ENCODE measurements at regions of chr22 and their contacts with region 1.

Region 1: DNA sequence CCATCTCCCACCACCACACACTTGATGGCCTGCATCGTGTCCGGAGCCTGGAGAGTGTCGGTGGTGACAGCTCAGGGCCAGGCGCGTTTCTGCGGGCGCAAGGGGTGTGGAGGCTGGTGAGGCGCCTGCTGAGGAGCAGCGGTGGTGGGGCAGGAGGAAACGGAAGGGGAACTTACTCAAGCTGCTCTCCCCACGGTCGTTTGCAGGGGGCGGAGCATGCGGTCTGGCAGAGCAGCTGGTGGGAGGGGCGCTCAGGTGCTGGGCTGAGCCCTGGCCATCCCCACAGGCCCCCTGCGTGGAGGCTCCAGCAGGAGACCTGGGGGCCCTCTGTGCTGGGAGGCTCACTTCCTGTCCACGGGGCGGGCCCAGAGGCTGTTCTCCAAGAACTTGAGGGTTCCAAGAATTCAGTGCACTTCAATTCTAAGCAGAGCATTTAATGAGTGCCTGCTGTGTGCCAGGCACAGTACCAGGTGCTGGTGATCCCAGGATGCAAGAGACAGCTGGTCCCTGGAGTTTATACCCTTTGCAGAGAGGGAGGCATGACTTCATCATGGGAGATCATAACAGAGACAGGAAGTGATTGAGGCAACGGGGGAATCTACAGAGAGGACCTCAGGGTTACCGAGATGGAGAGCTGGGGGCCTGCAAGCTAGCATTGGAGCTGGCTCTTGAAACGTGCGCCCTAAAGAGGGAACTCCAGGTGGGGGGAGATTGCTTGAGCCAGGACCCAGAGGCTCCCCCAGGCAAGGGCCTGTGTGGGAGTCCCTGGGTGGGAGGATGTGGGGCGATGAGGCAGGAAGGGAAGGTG is at the start of gene RAC2:
- DNase-seq: peak; percentile 98
- ATAC-seq: peak; percentile 71
- H3K4me3 Mint-ChIP-seq: peak within 1 kb of the TSS; percentile 98
- H3K27ac Mint-ChIP-seq: peak within 1 kb of the TSS; percentile 97
- H3K4me1 Mint-ChIP-seq: peaks cover 42% of the 10 kb centered on the region
- H3K27me3 Mint-ChIP-seq: no peaks in the 10 kb centered on the region
- CTCF ChIP-seq: no peak
- total RNA-seq, gene RAC2: 699 to 717 TPM

Region 2: GRCh38 chr22:37148742-37149665 is 95.3 kb before region 1 on chr22:
- CTCF ChIA-PET with region 1: no interaction called
- POLR2A ChIA-PET with region 1: interaction called, 41 read pairs
- intact Hi-C with region 1: no loop called
- DNase-seq: no peak
- ATAC-seq: no peak
- H3K4me3 Mint-ChIP-seq: peak overlapping the region; percentile 87
- H3K27ac Mint-ChIP-seq: peak overlapping the region; percentile 93
- H3K4me1 Mint-ChIP-seq: peaks cover 60% of the 10 kb centered on the region
- H3K27me3 Mint-ChIP-seq: no peaks in the 10 kb centered on the region
- CTCF ChIP-seq: no peak

Region 3: GRCh38 chr22:37218771-37219411 is 25.4 kb before region 1 on chr22:
- CTCF ChIA-PET with region 1: interaction called, 7 read pairs
- POLR2A ChIA-PET with region 1: interaction called, 61 read pairs
- intact Hi-C with region 1: no loop called
- DNase-seq: peak; percentile 85
- ATAC-seq: peak; percentile 74
- H3K4me3 Mint-ChIP-seq: peak overlapping the region; percentile 76
- H3K27ac Mint-ChIP-seq: peak overlapping the region; percentile 94
- H3K4me1 Mint-ChIP-seq: peaks cover 74% of the 10 kb centered on the region
- H3K27me3 Mint-ChIP-seq: no peaks in the 10 kb centered on the region
- CTCF ChIP-seq: no peak

Region 4: DNA sequence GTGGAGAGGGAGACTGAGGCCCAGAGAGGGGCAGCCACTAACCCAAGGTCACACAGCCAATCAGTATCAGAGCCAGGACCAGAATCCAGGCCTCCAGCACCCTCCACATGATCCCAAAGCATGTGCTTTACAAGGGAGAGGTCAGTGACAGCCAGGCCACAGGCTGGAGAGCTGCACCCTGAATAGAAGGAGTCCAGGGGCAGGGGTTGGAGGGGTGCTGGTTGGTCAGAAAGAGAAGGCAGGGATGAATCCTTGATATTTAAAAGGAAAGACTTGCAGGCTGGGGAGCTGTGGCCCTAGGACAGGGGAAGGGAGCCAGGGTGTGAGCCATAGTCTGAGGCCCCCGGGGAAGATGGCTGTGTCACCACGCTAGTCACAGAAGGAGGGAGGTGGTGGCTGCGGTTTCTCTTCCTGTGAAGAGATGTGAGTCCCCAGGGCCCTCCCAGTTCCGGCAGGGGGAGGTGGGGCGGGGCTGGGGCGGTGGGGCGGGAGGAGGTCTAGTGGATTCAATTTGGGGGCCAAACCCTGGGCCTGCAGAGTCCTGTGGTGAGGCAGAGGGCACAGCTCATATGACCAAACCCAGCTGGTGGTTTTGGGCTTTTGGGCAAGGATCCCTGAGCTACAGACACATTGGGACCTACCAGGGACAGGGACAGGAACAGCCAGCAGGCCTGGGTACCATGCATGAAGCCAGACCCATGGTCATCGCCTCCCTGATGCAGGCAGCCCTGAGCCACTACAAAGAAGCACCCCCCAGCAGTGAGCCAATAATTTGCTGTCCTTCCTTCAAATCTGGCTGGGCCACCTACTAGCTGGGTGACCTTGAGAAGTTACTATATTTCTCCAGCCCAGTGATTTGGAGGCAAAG is 14.3 kb before region 1 on chr22:
- CTCF ChIA-PET with region 1: interaction called, 37 read pairs
- POLR2A ChIA-PET with region 1: interaction called, 209 read pairs
- intact Hi-C with region 1: no loop called
- DNase-seq: peak; percentile 98
- ATAC-seq: peak; percentile 61
- H3K4me3 Mint-ChIP-seq: peak overlapping the region; percentile 76
- H3K27ac Mint-ChIP-seq: peak overlapping the region; percentile 98
- H3K4me1 Mint-ChIP-seq: peaks cover 85% of the 10 kb centered on the region
- H3K27me3 Mint-ChIP-seq: no peaks in the 10 kb centered on the region
- CTCF ChIP-seq: no peak

Region 5: GRCh38 chr22:37254209-37254866 is 10.0 kb after region 1 on chr22:
- CTCF ChIA-PET with region 1: interaction called, 154 read pairs
- POLR2A ChIA-PET with region 1: interaction called, 20 read pairs
- intact Hi-C with region 1: no loop called
- DNase-seq: no peak
- ATAC-seq: no peak
- H3K4me3 Mint-ChIP-seq: no peak overlapping the region
- H3K27ac Mint-ChIP-seq: peak overlapping the region; percentile 56
- H3K4me1 Mint-ChIP-seq: peaks cover 31% of the 10 kb centered on the region
- H3K27me3 Mint-ChIP-seq: no peaks in the 10 kb centered on the region
- CTCF ChIP-seq: no peak

Region 6: DNA sequence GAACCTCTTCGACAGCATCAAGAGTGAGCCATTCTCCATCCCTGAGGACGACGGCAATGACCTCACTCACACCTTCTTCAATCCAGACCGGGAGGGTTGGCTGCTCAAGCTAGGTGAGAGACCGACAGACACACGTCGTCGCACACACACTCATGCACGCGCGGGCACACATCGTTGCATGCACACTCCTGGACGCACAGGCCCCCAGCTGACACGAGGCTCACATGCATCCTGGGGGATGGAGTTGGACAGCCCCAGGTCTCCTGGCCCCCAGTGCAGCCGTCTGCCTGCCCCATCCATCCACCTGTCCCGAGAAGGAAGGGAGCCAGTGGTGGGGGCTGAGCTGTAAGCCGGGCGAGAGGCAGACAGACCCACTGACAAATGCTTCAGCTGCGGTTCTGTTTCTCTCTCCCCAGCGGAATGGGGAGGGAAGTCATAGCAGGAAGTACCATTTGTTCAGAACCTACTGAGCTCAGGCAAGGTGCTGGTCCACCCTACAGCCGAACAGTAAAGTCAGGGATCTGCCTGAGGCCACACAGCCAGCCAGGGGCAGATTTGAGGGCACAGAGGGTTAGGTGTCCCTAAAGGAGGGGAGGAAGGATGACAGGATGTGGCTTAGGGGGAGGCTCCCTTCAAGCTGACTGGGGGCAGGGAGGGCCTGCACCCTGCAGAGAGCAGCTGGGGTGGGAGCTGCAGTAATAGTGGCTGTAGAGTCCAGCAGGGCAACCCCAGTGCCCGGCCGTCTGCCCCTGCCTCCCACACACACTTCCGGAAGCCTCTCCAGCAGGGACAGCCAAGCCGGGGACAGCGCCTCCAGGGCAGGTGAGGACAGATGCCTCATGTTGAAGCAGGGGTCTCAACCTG is 65.1 kb after region 1 on chr22:
- CTCF ChIA-PET with region 1: no interaction called
- POLR2A ChIA-PET with region 1: interaction called, 10 read pairs
- intact Hi-C with region 1: no loop called
- DNase-seq: peak; percentile 78
- ATAC-seq: peak; percentile 51
- H3K4me3 Mint-ChIP-seq: peak overlapping the region; percentile 39
- H3K27ac Mint-ChIP-seq: peak overlapping the region; percentile 85
- H3K4me1 Mint-ChIP-seq: peaks cover 92% of the 10 kb centered on the region
- H3K27me3 Mint-ChIP-seq: no peaks in the 10 kb centered on the region
- CTCF ChIP-seq: no peak